ENCODE measurements at regions of chr2 and their contacts with region 1.

Region 1: GRCh38 chr2:69012310-69013141 is 453 bp upstream of the ANTXR1 start:
- DNase-seq: peak; percentile 82
- ATAC-seq: peak; percentile 79
- H3K4me3 ChIP-seq: peak overlapping the region; percentile 78
- H3K27ac ChIP-seq: peak overlapping the region; percentile 75
- H3K4me1 ChIP-seq: peaks cover 13% of the 10 kb centered on the region
- H3K27me3 ChIP-seq: no peaks in the 10 kb centered on the region
- CTCF ChIP-seq: peak; percentile 74

Region 2: DNA sequence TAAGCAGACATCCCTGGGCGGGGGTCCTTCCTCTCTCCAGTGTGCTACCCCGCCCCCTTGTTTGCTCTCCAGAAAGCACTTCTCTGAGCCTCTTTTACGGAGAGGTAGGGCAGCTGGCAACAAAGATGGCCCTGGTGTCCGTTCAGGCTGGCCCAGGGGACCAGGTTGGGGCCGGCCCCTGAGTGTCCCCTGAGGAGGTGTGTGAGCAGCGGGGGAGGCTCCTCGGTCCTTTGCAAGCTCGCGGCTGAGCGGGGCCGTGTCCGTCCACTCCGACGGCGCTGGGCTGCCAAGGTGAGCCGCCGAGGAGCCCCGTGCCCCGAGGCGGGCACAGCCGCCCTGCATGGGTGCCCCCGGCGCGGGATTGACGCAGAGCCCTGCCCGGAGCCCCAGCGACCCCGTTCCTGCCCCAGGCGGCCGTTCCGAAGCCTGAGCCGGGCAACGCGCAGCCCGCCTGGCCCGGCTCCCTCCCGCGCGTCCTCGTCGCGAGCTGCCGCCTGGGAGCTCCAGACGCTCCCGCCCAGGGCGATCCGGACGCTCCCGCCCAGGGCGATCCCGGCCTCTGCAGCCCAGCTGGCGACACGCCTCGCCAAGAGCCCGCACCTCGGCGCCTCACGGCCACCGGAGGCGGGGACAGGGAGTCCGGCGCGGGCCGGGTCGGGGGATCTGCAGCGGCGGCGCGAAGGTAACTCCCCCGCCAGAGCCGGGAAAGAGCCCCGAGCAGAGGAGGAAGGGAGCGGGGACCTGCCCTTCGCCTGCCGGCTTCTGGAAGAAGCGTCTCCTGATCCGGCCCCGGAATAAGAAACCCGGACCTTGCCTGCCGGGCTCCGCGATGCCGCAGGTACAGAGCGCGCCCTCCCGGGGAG is 369.3 kb before region 1 on chr2 and contains the start of gene PROKR1:
- intact Hi-C with region 1: no loop called
- DNase-seq: peak; percentile 77
- ATAC-seq: peak; percentile 84
- H3K4me3 ChIP-seq: peak within 1 kb of the TSS; percentile 53
- H3K27ac ChIP-seq: no peak within 1 kb of the TSS
- H3K4me1 ChIP-seq: peaks cover 10% of the 10 kb centered on the region
- H3K27me3 ChIP-seq: peaks cover 46% of the 10 kb centered on the region
- CTCF ChIP-seq: no peak
- total RNA-seq, gene PROKR1: not detected

Region 3: DNA sequence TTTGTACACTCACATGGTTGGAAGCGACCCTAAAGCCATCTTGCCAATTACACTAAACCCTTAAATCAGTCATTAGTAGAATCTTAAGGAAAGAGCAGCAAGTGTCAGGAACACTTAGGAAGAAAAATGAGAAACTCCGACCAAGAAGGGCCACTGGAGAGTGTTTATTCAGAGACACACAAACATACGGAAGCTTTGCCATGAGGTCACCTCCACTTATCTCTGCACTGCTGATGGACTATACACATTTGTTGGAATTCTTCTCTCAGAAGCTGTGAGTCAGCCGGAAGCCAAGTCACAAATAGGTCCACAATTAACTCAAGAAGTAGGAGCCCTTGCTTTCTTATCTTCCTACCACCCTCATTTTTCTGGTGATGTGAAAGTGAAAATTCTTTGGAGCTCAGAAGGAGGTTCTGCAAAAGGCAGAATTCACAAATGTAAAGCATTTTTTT is 162.9 kb before region 1 on chr2:
- intact Hi-C with region 1: no loop called
- DNase-seq: no peak
- ATAC-seq: no peak
- H3K4me3 ChIP-seq: no peak overlapping the region
- H3K27ac ChIP-seq: no peak overlapping the region
- H3K4me1 ChIP-seq: no peaks in the 10 kb centered on the region
- H3K27me3 ChIP-seq: no peaks in the 10 kb centered on the region
- CTCF ChIP-seq: no peak

Region 4: DNA sequence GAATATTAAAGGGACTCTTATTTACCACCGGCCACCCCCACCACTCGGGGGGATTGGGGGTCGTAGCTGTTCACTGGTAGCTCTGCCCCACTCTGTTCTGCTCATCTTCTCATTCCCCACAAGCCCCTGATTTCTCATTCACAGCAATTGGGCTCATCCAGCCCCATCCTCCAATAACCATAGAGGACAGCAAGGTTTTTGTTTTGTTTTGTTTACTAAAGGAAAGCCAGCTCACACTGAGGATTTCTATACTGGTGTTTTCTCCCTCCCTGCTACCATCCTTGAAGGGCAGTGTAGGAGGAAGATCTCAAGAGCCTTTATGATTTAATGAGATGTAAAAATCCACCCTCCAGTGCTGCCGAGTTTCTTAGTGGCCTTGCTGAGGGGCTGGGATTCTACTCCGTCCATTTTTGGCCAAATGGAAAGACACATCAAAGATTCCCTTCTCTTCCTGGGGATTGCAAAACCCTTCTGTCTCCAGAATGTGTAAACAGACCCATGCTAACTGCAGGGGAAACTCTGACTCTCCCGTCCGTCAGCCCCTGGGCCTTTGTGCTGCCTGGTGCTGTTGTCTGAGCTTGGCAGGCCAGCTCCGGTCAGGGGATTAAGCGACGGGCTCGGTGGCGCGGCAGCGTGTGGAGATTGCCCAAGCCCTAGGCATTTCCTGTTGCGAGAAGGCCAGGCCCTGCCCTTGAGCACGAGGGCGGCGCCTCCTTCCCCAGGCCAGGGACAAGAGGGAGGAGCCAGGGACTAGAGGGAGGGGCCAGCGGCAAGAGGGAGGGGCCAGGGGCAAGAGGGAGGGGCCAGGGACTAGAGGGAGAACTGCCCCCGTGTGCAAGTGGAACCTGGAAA is 165.5 kb after region 1 on chr2:
- intact Hi-C with region 1: no loop called
- DNase-seq: peak; percentile 93
- ATAC-seq: peak; percentile 97
- H3K4me3 ChIP-seq: peak overlapping the region; percentile 8
- H3K27ac ChIP-seq: peak overlapping the region; percentile 93
- H3K4me1 ChIP-seq: peaks cover 26% of the 10 kb centered on the region
- H3K27me3 ChIP-seq: no peaks in the 10 kb centered on the region
- CTCF ChIP-seq: no peak

Region 5: GRCh38 chr2:69306822-69307578 is 294.5 kb after region 1 on chr2:
- intact Hi-C with region 1: loop called (anchors 10 kb)
- DNase-seq: peak; percentile 86
- ATAC-seq: peak; percentile 89
- H3K4me3 ChIP-seq: peak overlapping the region; percentile 62
- H3K27ac ChIP-seq: peak overlapping the region; percentile 83
- H3K4me1 ChIP-seq: peaks cover 33% of the 10 kb centered on the region
- H3K27me3 ChIP-seq: no peaks in the 10 kb centered on the region
- CTCF ChIP-seq: peak; percentile 74

Measured in upper lobe of right lung (tissue), 1 donor.